BJ (cell line): ENCODE measurements at regions of chr19 and their contacts with region 1.

Region 1: GRCh38 chr19:33795370-33796163 is 1.1 kb upstream of the KCTD15 start:
- DNase-seq: peak; percentile 27
- H3K4me3 ChIP-seq: peak overlapping the region; percentile 69
- H3K27me3 ChIP-seq: peaks cover 4% of the 10 kb centered on the region; the same call in 1 of the 2 replicates
- CTCF ChIP-seq: peak; percentile 69

Region 2: DNA sequence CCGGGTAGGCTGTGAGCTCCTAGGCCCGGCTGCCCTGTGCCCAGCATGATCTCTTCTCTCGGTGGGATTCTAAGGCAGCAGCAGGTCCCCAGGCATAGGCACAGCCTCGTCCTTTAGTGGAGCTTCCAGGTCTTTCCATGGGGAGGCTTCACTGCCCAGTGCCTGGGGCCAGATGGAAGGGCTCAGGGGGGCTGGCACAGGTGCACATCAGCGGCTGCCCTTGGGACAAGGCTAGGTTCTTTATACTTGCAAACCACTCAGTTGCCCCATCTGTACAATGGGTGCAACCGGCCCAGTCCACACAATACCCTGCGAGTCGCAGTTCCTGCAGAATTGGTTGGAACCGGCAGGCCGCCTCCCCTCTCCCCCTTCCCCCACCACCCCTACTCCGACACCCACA is 15.3 kb after region 1 on chr19:
- CTCF ChIA-PET with region 1: interaction called, 3 read pairs
- POLR2A ChIA-PET with region 1: interaction called, 12 read pairs
- DNase-seq: no peak
- H3K4me3 ChIP-seq: no peak overlapping the region
- H3K27me3 ChIP-seq: no peaks in the 10 kb centered on the region
- CTCF ChIP-seq: no peak